ENCODE measurements at regions of chr16 and their contacts with region 1.

Region 1: DNA sequence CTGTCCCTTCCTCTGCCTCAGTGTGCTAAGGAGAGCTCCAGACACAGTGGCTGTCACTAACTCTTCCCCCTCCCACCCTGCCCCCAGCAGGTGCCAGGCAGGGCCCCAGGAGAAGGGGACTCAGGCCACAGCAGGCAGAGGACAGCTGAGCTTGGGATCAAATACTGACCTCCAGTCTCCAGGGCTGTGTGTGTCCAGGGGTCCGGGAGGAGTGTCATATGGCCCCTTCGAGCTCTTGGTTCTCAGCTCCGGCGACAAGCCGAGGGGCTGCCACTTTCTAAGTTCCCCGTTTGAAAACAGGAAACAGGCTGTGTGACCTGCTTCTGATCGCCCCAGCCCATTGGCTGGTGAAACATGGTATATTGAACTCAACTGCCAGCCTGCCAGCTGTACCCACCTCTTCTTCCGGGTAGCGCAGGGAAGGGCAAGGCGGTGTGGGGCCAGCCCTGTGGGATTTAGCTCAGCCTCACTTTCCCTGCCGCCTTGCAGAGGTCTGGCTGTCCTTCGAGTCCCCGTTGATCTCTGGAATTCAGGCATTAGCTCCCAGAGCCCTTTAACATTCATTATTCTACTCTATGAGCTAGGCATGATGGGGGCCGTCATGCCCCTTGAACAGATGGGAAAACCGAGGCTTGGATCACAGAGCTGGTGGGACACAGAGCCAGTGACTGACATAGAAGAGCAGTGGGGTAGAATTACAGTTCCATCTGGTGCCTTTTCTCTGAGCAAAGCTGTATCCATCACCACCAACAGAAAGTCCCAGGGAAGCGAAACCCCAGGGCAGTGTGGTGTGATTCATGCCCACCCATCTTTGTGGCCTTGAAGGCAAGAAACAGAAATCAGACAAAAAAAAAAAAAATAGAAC is at the start of gene SNX20:
- DNase-seq: peak; percentile 81
- ATAC-seq: peak; percentile 76
- H3K4me3 ChIP-seq: peak within 1 kb of the TSS; percentile 76 to 96 (median 93)
- H3K4me3 Mint-ChIP-seq: peak within 1 kb of the TSS; percentile 93
- H3K27ac ChIP-seq: peak within 1 kb of the TSS; percentile 92 to 95
- H3K27ac Mint-ChIP-seq: peak within 1 kb of the TSS; percentile 98
- H3K4me1 ChIP-seq: peaks cover 74 to 76% of the 10 kb centered on the region in 2 donors
- H3K4me1 Mint-ChIP-seq: peaks cover 73% of the 10 kb centered on the region
- H3K27me3 ChIP-seq: no peaks in the 10 kb centered on the region
- H3K27me3 Mint-ChIP-seq: no peaks in the 10 kb centered on the region
- CTCF ChIP-seq: no peak
- total RNA-seq, gene SNX20: 43.0 and 47.7 TPM in 2 replicates

Region 2: DNA sequence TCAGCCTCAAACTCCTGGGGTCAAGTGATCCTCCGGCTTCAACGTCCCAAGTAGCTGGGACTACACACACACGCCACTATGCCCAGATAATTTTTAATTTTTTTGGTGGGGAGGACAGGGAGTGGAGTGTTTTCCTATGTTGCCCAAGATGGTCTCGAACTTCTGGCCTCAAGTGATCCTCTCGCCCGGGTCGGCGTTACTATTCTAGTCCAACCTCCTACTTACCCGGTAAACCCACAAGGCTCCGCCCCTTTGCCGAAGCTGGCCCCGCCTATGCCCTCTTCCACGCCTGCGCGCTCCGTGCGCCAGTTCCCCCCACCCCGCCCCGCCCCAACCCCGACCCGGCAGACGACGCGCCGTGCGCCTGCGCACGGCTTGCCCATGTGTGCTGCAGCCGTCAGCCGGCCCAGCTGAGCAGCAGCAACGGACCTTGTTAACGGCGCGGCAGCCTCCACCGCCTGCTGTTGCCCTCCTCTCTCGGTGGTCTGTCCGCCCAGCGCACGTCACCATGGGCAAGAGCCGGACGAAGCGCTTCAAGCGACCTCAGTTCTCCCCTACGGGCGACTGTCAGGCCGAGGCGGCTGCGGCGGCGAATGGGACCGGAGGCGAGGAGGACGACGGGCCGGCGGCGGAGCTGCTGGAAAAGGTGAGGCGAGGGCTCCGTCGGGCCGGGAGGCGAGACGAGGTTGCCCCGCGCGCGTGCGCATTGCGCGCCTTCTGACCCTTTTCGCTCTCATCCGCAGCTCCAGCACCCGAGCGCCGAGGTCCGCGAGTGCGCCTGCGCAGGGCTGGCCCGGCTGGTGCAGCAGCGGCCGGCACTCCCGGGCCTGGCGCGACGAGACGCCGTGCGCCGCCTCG is 615.4 kb before region 1 on chr16 and contains the start of gene HEATR3:
- CTCF ChIA-PET with region 1: interaction called, 4 read pairs
- POLR2A ChIA-PET with region 1: no interaction called
- intact Hi-C with region 1: loop called (anchors 5 kb)
- DNase-seq: peak; percentile 95
- ATAC-seq: peak; percentile 86
- H3K4me3 ChIP-seq: peak within 1 kb of the TSS; percentile 39 to 82 (median 75)
- H3K4me3 Mint-ChIP-seq: peak within 1 kb of the TSS; percentile 89
- H3K27ac ChIP-seq: peak within 1 kb of the TSS; percentile 47 to 63
- H3K27ac Mint-ChIP-seq: peak within 1 kb of the TSS; percentile 92
- H3K4me1 ChIP-seq: peaks cover 17 to 20% of the 10 kb centered on the region in 2 donors
- H3K4me1 Mint-ChIP-seq: peaks cover 35% of the 10 kb centered on the region
- H3K27me3 ChIP-seq: no peaks in the 10 kb centered on the region
- H3K27me3 Mint-ChIP-seq: no peaks in the 10 kb centered on the region
- CTCF ChIP-seq: no peak
- total RNA-seq, gene HEATR3: 21.0 and 21.2 TPM in 2 replicates

Region 3: GRCh38 chr16:50273681-50274325 is 407.4 kb before region 1 on chr16:
- CTCF ChIA-PET with region 1: no interaction called
- POLR2A ChIA-PET with region 1: interaction called, 7 read pairs
- intact Hi-C with region 1: loop called (anchors 1 kb)
- DNase-seq: peak; percentile 88
- ATAC-seq: peak; percentile 81
- H3K4me3 ChIP-seq: peak overlapping the region; percentile 12 to 84 (median 80)
- H3K4me3 Mint-ChIP-seq: peak overlapping the region; percentile 98
- H3K27ac ChIP-seq: peak overlapping the region; percentile 93 to 97
- H3K27ac Mint-ChIP-seq: peak overlapping the region; percentile 100
- H3K4me1 ChIP-seq: peaks cover 63 to 74% of the 10 kb centered on the region in 2 donors
- H3K4me1 Mint-ChIP-seq: peaks cover 75% of the 10 kb centered on the region
- H3K27me3 ChIP-seq: no peaks in the 10 kb centered on the region
- H3K27me3 Mint-ChIP-seq: no peaks in the 10 kb centered on the region
- CTCF ChIP-seq: no peak

Region 4: GRCh38 chr16:50437769-50438437 is 243.3 kb before region 1 on chr16:
- CTCF ChIA-PET with region 1: no interaction called
- POLR2A ChIA-PET with region 1: no interaction called
- intact Hi-C with region 1: no loop called
- DNase-seq: no peak
- ATAC-seq: no peak
- H3K4me3 ChIP-seq: no peak overlapping the region
- H3K4me3 Mint-ChIP-seq: no peak overlapping the region
- H3K27ac ChIP-seq: no peak overlapping the region
- H3K27ac Mint-ChIP-seq: no peak overlapping the region
- H3K4me1 ChIP-seq: no peaks in the 10 kb centered on the region
- H3K4me1 Mint-ChIP-seq: no peaks in the 10 kb centered on the region
- H3K27me3 ChIP-seq: peaks cover 0 to 16% (median 9%) of the 10 kb centered on the region in 4 experiments
- H3K27me3 Mint-ChIP-seq: peaks cover 20% of the 10 kb centered on the region
- CTCF ChIP-seq: no peak

Region 5: DNA sequence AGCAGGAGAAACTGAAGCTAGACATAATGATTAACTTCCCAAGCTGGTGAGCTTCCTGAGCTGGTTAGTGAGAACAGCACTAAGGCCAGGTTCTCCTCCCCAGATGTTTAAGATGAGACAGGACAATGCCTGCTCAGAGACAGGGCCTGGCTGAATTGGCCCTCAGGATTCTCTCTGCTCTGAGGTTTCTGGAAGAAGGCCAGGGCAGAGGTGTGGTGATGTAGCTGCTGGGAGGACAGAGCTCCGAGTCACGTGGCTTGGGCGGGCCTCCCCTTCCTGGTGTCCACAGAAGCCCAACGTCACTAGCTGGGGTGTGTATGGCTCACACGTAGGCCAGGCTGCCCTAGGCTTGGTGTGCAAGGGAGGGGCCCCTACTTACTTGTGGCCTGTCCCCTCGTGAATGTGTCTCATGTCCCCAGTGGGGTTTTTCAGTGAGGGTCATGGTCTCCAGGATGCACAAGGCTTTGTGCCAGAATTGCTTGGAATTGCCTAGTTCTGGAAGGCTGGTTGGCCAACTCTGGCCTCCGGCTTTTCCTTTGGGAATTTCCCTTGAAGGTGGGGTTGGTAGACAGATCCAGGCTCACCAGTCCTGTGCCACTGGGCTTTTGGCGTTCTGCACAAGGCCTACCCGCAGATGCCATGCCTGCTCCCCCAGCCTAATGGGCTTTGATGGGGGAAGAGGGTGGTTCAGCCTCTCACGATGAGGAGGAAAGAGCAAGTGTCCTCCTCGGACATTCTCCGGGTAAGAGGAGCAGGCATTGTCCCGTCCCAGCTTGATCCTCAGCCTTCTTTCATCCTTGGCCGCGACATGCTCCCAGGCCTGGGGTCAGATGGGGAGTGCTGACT is 15.5 kb after region 1 on chr16:
- CTCF ChIA-PET with region 1: interaction called, 8 read pairs
- POLR2A ChIA-PET with region 1: interaction called, 10 read pairs
- intact Hi-C with region 1: loop called (anchors 2 kb)
- DNase-seq: no peak
- ATAC-seq: no peak
- H3K4me3 ChIP-seq: no peak overlapping the region
- H3K4me3 Mint-ChIP-seq: peak overlapping the region; percentile 29
- H3K27ac ChIP-seq: peak overlapping the region in 1 of 2 donors; percentile 39
- H3K27ac Mint-ChIP-seq: peak overlapping the region; percentile 85
- H3K4me1 ChIP-seq: peaks cover 43 to 44% of the 10 kb centered on the region in 2 donors
- H3K4me1 Mint-ChIP-seq: peaks cover 63% of the 10 kb centered on the region
- H3K27me3 ChIP-seq: no peaks in the 10 kb centered on the region
- H3K27me3 Mint-ChIP-seq: no peaks in the 10 kb centered on the region
- CTCF ChIP-seq: no peak

Region 6: DNA sequence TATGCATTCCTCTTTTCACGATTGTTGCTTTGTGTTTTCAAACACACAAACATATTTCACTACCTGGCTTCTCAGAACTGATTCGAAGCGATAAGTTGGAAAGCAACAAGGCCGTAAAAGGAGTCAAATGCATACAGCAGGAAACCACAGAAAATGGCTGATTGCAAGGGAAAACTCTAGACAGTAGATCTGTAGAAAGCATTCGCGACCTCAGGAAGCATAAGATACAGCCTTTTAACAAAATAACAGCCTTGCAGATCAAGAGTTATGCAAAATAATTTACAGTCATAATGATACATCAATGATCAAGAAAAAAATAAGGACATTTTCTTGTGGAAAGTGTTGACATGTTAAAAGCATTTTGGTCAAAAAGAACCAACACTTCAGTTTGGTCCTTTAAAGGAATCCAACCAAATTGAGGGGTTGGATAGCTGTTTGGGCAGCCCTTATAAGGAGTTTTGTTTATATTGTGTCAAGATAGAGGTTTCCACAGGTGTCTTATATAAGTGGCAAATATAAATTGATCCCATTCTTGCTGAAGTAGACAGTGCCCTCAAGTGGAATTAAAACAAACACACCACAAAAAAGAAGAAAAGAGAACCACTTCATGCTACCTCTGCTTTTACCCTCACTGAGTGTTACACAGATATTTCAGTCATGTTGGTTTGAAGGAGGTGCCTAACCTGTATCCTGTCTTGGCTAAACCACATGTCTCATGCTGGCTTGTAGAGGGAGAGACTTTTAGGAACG is 66.1 kb after region 1 on chr16:
- CTCF ChIA-PET with region 1: interaction called, 44 read pairs
- POLR2A ChIA-PET with region 1: interaction called, 8 read pairs
- intact Hi-C with region 1: no loop called
- DNase-seq: peak; percentile 60
- ATAC-seq: peak; percentile 61
- H3K4me3 ChIP-seq: no peak overlapping the region
- H3K4me3 Mint-ChIP-seq: peak overlapping the region; percentile 74
- H3K27ac ChIP-seq: peak overlapping the region in 1 of 2 donors; percentile 58
- H3K27ac Mint-ChIP-seq: peak overlapping the region; percentile 59
- H3K4me1 ChIP-seq: peaks cover 33 to 39% of the 10 kb centered on the region in 2 donors
- H3K4me1 Mint-ChIP-seq: peaks cover 55% of the 10 kb centered on the region
- H3K27me3 ChIP-seq: no peaks in the 10 kb centered on the region
- H3K27me3 Mint-ChIP-seq: no peaks in the 10 kb centered on the region
- CTCF ChIP-seq: peak; percentile 74

Region 7: GRCh38 chr16:50841081-50841886 is 160.0 kb after region 1 on chr16:
- CTCF ChIA-PET with region 1: no interaction called
- POLR2A ChIA-PET with region 1: no interaction called
- intact Hi-C with region 1: no loop called
- DNase-seq: peak; percentile 7
- ATAC-seq: no peak
- H3K4me3 ChIP-seq: peak overlapping the region in 3 of 5 experiments; percentile 35 to 63 (median 49)
- H3K4me3 Mint-ChIP-seq: peak overlapping the region; percentile 79
- H3K27ac ChIP-seq: no peak overlapping the region
- H3K27ac Mint-ChIP-seq: no peak overlapping the region
- H3K4me1 ChIP-seq: peaks cover 11 to 12% of the 10 kb centered on the region in 2 donors
- H3K4me1 Mint-ChIP-seq: peaks cover 14% of the 10 kb centered on the region
- H3K27me3 ChIP-seq: peaks cover 0 to 43% (median 13%) of the 10 kb centered on the region in 4 experiments
- H3K27me3 Mint-ChIP-seq: peaks cover 48% of the 10 kb centered on the region
- CTCF ChIP-seq: no peak

Region 8: DNA sequence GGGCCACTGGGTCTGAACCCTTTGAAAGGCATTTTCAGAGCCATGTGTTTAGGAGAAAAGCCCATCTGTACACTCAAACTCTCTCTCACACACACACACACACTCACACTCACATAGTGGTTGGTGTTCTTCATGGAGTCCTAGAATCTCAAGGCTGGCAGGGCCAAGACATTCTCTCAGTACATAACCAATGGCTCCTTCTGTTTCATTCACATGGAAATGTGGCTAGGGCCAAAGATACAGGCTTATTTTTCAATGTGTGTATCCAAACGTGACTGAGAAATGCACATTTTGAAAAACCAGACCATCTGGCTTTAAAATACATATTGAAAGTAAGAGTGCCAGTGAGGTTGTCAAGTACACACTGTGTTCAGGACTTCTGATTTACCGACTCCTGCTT is 528.8 kb after region 1 on chr16:
- CTCF ChIA-PET with region 1: no interaction called
- POLR2A ChIA-PET with region 1: no interaction called
- intact Hi-C with region 1: no loop called
- DNase-seq: no peak
- ATAC-seq: no peak
- H3K4me3 ChIP-seq: no peak overlapping the region
- H3K4me3 Mint-ChIP-seq: no peak overlapping the region
- H3K27ac ChIP-seq: no peak overlapping the region
- H3K27ac Mint-ChIP-seq: no peak overlapping the region
- H3K4me1 ChIP-seq: no peaks in the 10 kb centered on the region
- H3K4me1 Mint-ChIP-seq: no peaks in the 10 kb centered on the region
- H3K27me3 ChIP-seq: no peaks in the 10 kb centered on the region
- H3K27me3 Mint-ChIP-seq: no peaks in the 10 kb centered on the region
- CTCF ChIP-seq: no peak